HAP-1 (cell line): ENCODE measurements at regions of chr19 and their contacts with region 1.

Region 1: GRCh38 chr19:46025835-46026234 is 3.0 kb upstream of the PGLYRP1 start:
- DNase-seq: no peak
- H3K4me3 ChIP-seq: no peak overlapping the region
- H3K4me1 ChIP-seq: no peaks in the 10 kb centered on the region
- H3K27me3 ChIP-seq: no peaks in the 10 kb centered on the region

Region 2: GRCh38 chr19:45717166-45717982 is 308.5 kb before region 1 on chr19:
- in situ Hi-C with region 1: no loop called
- DNase-seq: peak; percentile 98 to 99
- H3K4me3 ChIP-seq: peak overlapping the region; percentile 61
- H3K4me1 ChIP-seq: peaks cover 8% of the 10 kb centered on the region
- H3K27me3 ChIP-seq: no peaks in the 10 kb centered on the region

Region 3: GRCh38 chr19:46232029-46232428 is 206.2 kb after region 1 on chr19:
- in situ Hi-C with region 1: no loop called
- DNase-seq: no peak
- H3K4me3 ChIP-seq: no peak overlapping the region
- H3K4me1 ChIP-seq: no peaks in the 10 kb centered on the region
- H3K27me3 ChIP-seq: peaks cover 18% of the 10 kb centered on the region

Region 4: GRCh38 chr19:46265217-46265828 is 239.5 kb after region 1 on chr19:
- in situ Hi-C with region 1: loop called (anchors 5 kb)
- DNase-seq: peak; percentile 75 to 84
- H3K4me3 ChIP-seq: no peak overlapping the region
- H3K4me1 ChIP-seq: peaks cover under 1% of the 10 kb centered on the region
- H3K27me3 ChIP-seq: no peaks in the 10 kb centered on the region